Activated naive CD4-positive, alpha-beta T cell treated with anti-CD3 and anti-CD28 coated beads for 36 hours (primary cell): ENCODE measurements at regions of chr2 and their contacts with region 1.

Region 1: GRCh38 chr2:165953655-165954606 is at the start of gene TTC21B:
- DNase-seq: peak; percentile 93
- H3K4me3 Mint-ChIP-seq: peak within 1 kb of the TSS; percentile 53
- H3K27ac Mint-ChIP-seq: no peak within 1 kb of the TSS
- H3K4me1 Mint-ChIP-seq: peaks cover 13% of the 10 kb centered on the region
- H3K27me3 Mint-ChIP-seq: no peaks in the 10 kb centered on the region
- total RNA-seq, gene TTC21B: 22.6 TPM

Region 2: GRCh38 chr2:165293440-165294353 is 660.2 kb before region 1 on chr2:
- CTCF ChIA-PET with region 1: no interaction called
- intact Hi-C with region 1: loop called (anchors 5 kb)
- DNase-seq: peak; percentile 52
- H3K4me3 Mint-ChIP-seq: no peak overlapping the region
- H3K27ac Mint-ChIP-seq: no peak overlapping the region
- H3K4me1 Mint-ChIP-seq: peaks cover 5% of the 10 kb centered on the region
- H3K27me3 Mint-ChIP-seq: peaks cover 10% of the 10 kb centered on the region

Region 3: GRCh38 chr2:165794536-165794928 is 159.4 kb before region 1 on chr2:
- CTCF ChIA-PET with region 1: no interaction called
- intact Hi-C with region 1: loop called (anchors 1 kb)
- DNase-seq: peak; percentile 78
- H3K4me3 Mint-ChIP-seq: peak overlapping the region; percentile 82
- H3K27ac Mint-ChIP-seq: peak overlapping the region; percentile 78
- H3K4me1 Mint-ChIP-seq: peaks cover 15% of the 10 kb centered on the region
- H3K27me3 Mint-ChIP-seq: peaks cover 32% of the 10 kb centered on the region

Region 4: GRCh38 chr2:166013878-166014277 is 59.9 kb after region 1 on chr2:
- CTCF ChIA-PET with region 1: no interaction called
- intact Hi-C with region 1: no loop called
- DNase-seq: no peak
- H3K4me3 Mint-ChIP-seq: no peak overlapping the region
- H3K27ac Mint-ChIP-seq: no peak overlapping the region
- H3K4me1 Mint-ChIP-seq: no peaks in the 10 kb centered on the region
- H3K27me3 Mint-ChIP-seq: peaks cover 8% of the 10 kb centered on the region

Region 5: DNA sequence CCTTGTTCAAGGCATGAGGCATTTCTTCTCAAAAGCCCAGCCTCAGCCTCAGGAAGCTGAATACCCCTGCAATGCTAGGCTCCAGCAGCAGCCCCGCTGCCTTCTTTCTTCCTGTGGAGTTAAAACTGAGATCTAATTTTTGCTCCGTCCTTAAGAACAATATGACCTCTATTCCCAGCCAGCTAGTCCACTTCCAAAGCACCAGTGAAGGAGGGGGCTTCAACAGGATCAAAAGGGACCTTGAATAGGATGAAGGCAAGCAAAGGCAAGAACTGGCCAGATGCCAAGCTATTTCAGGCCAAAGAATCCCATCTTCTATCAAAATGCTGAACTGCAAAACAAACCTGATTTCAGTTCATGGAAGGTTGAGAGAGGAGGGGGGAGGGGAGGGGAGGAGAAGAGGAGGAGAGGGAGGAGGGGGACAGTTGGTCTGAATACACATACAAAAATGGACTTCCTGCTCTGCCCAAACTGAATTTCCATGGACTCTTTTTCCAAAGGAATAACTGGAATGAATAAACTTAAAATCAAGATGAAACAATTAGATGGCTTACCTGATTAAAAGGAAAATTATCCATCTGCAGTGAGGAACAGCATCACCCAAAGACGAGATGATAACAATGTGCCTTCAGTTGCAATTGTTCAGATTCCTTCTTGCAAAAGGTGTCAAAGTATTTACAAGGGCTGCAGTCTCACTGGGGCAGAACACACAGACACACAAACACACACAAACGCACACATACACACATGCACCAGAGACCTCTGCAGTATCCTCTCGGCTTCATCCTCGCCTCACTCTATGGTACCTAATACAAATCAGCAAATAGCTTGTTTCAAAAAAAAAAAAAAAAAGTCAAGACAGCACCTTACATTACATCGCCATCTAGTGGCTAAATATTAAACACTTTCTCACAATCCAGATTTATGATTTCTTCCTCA is 173.6 kb after region 1 on chr2 and contains the start of gene SCN1A:
- CTCF ChIA-PET with region 1: interaction called, 16 read pairs
- intact Hi-C with region 1: loop called (anchors 1 kb)
- DNase-seq: no peak
- H3K4me3 Mint-ChIP-seq: no peak within 1 kb of the TSS
- H3K27ac Mint-ChIP-seq: no peak within 1 kb of the TSS
- H3K4me1 Mint-ChIP-seq: peaks cover 2% of the 10 kb centered on the region
- H3K27me3 Mint-ChIP-seq: peaks cover 12% of the 10 kb centered on the region
- total RNA-seq, gene SCN1A: not detected